AG04449 (cell line): ENCODE measurements at regions of chr9 and their contacts with region 1.

Region 1: GRCh38 chr9:128094166-128094967 is 26.3 kb downstream of the SLC25A25 start:
- DNase-seq: peak; percentile 80
- H3K4me3 ChIP-seq: peak overlapping the region; percentile 32
- CTCF ChIP-seq: no peak

Region 2: GRCh38 chr9:128081056-128081455 is 13.3 kb before region 1 on chr9:
- CTCF ChIA-PET with region 1: interaction called, 24 read pairs
- POLR2A ChIA-PET with region 1: no interaction called
- DNase-seq: peak; percentile 70
- H3K4me3 ChIP-seq: no peak overlapping the region
- CTCF ChIP-seq: no peak

Region 3: GRCh38 chr9:128127990-128128835 is 33.8 kb after region 1 on chr9:
- CTCF ChIA-PET with region 1: interaction called, 11 read pairs
- POLR2A ChIA-PET with region 1: interaction called, 4 read pairs
- DNase-seq: peak; percentile 42
- H3K4me3 ChIP-seq: peak overlapping the region; percentile 95
- CTCF ChIP-seq: no peak

Region 4: DNA sequence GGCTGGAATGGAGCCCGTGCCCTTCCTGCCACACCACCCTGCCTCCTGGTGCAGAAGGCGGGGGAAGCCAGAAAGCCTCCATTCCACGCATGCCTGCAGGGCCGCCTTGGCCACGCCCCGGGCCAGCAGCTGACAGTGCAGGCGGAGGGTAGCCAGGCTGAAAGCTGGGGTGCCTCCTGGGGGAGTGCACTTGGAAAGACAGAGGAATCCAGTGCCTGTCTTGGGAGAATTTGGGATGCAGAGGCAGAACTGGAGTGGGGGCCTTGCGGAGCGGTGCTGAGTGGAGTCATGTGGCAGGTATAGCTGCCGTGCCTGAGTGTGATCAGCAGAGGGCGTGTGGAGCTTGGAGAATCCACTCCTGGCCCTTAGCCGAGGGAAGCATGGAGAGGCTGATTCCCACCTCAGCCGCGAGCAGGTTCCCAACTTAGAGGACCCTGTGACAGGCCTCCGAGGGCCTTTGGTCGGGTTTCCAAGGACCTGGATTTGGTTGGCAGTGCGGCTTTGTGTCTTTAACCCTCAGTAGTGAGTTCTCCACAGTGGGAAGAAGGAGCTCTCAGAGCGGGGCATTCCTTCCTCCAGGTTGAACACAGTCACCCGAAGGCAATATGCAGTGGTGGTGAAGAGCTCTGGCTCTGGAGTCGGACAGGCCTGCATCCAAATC is 267.7 kb after region 1 on chr9:
- CTCF ChIA-PET with region 1: no interaction called
- POLR2A ChIA-PET with region 1: no interaction called
- DNase-seq: peak; percentile 36
- H3K4me3 ChIP-seq: peak overlapping the region; percentile 58
- CTCF ChIP-seq: peak; percentile 90